ENCODE measurements at regions of chr2 and their contacts with region 1.

Region 1: DNA sequence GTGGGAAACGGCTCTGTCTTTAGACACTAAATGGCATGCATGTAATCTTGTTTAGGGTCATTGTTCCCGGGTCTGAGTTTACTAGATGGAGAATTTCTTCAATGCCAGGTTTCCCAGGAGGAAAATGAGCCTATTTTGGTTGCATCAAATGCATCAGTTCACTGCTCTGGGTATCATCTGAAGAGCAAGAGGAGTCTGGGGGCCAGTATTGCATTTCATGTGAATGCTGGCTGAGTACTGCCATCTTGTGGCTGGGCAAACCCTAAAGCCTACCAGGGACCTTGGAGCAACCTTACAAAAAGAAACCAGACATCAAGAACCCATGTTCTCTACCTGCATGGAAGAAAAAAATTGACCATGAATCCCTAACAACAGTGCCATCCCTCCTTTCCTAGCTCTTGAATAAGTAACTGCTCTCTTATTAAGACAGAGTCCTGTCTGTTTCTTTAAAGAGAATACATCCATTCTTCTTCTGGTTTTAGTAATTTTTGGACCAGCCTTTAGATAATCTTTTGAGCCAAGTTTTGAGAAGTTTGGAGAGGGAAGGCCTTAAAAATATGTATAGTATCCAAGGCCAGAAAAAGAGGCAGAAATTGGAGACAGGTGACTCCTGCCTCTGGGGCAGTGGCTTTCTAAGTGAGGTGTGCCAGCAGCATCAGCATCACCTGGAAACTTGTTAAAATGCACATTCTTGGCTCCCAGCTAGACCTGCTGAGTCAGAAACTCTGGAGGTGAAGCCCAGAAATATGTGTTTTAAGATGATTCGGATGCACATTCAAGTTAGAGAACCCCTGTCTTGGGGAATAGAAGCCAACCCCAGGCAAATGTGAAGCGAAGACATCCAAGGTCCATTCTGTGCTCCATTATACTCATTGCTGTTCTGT is 261.0 kb upstream of the CXCR4 start:
- DNase-seq: peak; percentile 27 to 41
- ATAC-seq: peak; percentile 49 to 79 (median 70)
- H3K4me3 ChIP-seq: no peak overlapping the region
- H3K27ac ChIP-seq: peak overlapping the region in 1 of 10 donors; percentile 14
- H3K4me1 ChIP-seq: peaks cover 0 to 49% (median 4%) of the 10 kb centered on the region in 9 donors
- H3K27me3 ChIP-seq: peaks cover 0 to 4% (median 0%) of the 10 kb centered on the region in 7 donors
- CTCF ChIP-seq: peak; percentile 16 to 86 (median 74)

Region 2: GRCh38 chr2:135299656-135300244 is 1079.2 kb before region 1 on chr2:
- intact Hi-C with region 1: no loop called
- DNase-seq: no peak
- ATAC-seq: no peak
- H3K4me3 ChIP-seq: no peak overlapping the region
- H3K27ac ChIP-seq: no peak overlapping the region
- H3K4me1 ChIP-seq: no peaks in the 10 kb centered on the region
- H3K27me3 ChIP-seq: no peaks in the 10 kb centered on the region
- CTCF ChIP-seq: no peak

Region 3: GRCh38 chr2:135913727-135914365 is 465.1 kb before region 1 on chr2:
- intact Hi-C with region 1: loop called (anchors 1 to 5 kb)
- DNase-seq: peak in 1 of 2 donors; percentile 29
- ATAC-seq: peak in 1 of 8 donors; percentile 21
- H3K4me3 ChIP-seq: no peak overlapping the region
- H3K27ac ChIP-seq: peak overlapping the region in 1 of 10 donors; percentile 6
- H3K4me1 ChIP-seq: no peaks in the 10 kb centered on the region
- H3K27me3 ChIP-seq: no peaks in the 10 kb centered on the region
- CTCF ChIP-seq: peak; percentile 55 to 86 (median 78)

Region 4: DNA sequence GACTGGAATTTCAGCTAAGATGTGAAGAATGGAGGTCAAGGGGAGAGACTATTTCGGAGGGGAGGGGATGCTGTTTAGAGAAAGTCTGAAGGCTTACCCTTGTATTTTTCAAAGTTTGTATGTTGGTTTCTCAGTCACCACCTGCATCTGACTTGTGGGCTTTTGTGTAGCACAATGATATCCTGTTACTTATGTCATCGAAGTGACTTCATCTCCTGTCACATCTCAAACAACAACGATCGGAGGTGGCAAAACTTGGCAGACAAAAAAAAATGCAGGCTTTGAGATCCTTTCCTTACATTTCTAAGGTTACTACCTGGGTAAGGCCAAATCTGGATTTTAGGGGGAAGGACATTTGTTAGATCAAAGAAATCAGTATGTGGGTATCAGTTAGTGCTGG is 249.4 kb before region 1 on chr2:
- intact Hi-C with region 1: loop called in 1 of 10 experiments (anchors 10 kb)
- DNase-seq: no peak
- ATAC-seq: peak in 1 of 8 donors; percentile 22
- H3K4me3 ChIP-seq: no peak overlapping the region
- H3K27ac ChIP-seq: peak overlapping the region in 1 of 10 donors; percentile 79
- H3K4me1 ChIP-seq: peaks cover 0 to 74% (median 0%) of the 10 kb centered on the region in 9 donors
- H3K27me3 ChIP-seq: peaks cover 0 to 31% (median 2%) of the 10 kb centered on the region in 7 donors
- CTCF ChIP-seq: no peak

Region 5: DNA sequence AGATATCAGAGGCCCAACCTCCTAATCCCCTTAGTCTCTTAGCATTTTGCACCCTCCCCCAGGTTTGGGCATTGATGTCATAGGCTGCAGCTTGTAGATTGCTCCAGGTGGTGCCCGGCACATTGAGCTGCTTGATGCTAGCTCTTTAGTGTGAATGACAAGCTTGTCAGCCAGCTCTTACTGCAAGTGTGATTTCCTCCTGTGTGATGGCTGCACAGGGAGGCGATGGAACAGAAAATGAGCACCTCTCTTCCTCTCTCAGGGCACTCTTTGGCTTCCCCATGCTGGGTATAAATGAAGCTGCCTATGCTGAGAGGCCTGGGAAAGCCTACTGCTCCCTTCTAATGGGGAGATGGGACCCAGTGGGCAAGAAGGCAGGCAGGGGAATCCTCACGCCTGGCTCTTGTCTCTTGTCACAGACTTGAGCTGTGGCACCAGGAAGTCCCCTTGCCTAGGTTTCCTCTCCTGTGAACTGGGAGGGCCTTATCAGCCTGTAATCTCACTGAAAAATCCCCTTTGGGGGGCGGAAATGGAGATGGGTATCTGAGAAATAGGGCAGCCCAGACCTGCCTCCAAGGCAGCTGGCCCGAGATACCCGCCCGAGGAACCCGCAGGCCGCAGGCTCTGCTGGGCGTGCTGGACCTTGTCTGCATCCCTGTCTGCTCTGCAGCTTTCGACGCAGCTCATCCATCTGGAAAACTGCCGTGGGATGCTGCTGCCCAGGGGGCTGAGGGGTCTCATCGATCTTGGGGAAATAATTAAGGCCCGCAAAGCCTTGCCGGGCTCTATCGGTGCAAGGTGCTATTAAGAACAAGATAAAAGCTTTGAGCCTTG is 97.5 kb before region 1 on chr2:
- intact Hi-C with region 1: no loop called
- DNase-seq: no peak
- ATAC-seq: no peak
- H3K4me3 ChIP-seq: no peak overlapping the region
- H3K27ac ChIP-seq: peak overlapping the region in 1 of 10 donors; percentile 74
- H3K4me1 ChIP-seq: peaks cover 0 to 8% (median 0%) of the 10 kb centered on the region in 9 donors
- H3K27me3 ChIP-seq: peaks cover 0 to 3% (median 0%) of the 10 kb centered on the region in 7 donors
- CTCF ChIP-seq: no peak

Region 6: GRCh38 chr2:136452528-136452927 is 73.6 kb after region 1 on chr2:
- intact Hi-C with region 1: no loop called
- DNase-seq: no peak
- ATAC-seq: no peak
- H3K4me3 ChIP-seq: no peak overlapping the region
- H3K27ac ChIP-seq: no peak overlapping the region
- H3K4me1 ChIP-seq: no peaks in the 10 kb centered on the region
- H3K27me3 ChIP-seq: peaks cover 0 to 37% (median 4%) of the 10 kb centered on the region in 7 donors
- CTCF ChIP-seq: no peak

Measured in heart right ventricle (tissue), 16 donors.